ENCODE measurements at regions of chr10 and their contacts with region 1.

Region 1: GRCh38 chr10:48363617-48364355 is 57.3 kb downstream of the MAPK8 start:
- H3K4me3 ChIP-seq: no peak overlapping the region
- H3K27ac ChIP-seq: no peak overlapping the region
- H3K4me1 ChIP-seq: peaks cover 16% of the 10 kb centered on the region
- CTCF ChIP-seq: peak; percentile 63; the same call in 1 of the 2 replicates

Region 2: DNA sequence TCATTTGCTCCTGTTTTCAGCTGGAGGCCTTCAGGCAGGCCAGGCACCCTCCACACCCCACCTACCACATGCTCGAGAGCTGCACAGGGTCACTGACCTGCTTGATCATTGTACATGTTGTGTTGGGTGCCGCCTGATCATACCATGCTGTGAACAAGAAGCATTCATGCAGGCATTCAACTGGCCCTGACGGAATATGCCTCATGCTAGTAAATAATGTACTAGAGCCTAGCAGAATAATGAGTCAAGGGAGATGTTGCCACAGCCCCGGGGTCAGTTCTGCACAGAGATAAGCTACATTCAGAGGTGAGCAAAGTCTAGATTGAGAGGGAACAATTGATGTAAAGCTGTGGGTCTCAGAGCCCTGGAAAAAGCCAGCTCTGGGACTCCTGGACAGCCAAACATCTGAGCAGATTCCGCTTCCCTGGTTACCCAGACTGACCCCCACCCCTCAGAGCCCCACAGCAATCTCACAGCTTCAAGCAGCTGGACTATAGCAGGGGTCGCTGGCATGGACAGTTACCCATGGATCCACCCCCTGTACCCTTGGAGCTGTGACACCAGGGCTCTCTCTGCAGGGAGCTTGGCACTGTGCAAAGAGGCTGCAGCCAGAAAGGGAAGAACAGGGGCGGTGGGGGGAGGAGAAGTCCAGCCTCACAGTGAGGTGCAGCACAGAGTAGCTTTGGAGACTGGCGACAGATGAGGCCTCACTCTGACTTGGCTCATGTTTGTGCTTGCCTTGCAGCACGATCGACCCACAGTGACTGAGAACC is 175.9 kb before region 1 on chr10:
- CTCF ChIA-PET with region 1: no interaction called
- POLR2A ChIA-PET with region 1: no interaction called
- H3K4me3 ChIP-seq: no peak overlapping the region
- H3K27ac ChIP-seq: no peak overlapping the region
- H3K4me1 ChIP-seq: no peaks in the 10 kb centered on the region
- CTCF ChIP-seq: no peak

Region 3: DNA sequence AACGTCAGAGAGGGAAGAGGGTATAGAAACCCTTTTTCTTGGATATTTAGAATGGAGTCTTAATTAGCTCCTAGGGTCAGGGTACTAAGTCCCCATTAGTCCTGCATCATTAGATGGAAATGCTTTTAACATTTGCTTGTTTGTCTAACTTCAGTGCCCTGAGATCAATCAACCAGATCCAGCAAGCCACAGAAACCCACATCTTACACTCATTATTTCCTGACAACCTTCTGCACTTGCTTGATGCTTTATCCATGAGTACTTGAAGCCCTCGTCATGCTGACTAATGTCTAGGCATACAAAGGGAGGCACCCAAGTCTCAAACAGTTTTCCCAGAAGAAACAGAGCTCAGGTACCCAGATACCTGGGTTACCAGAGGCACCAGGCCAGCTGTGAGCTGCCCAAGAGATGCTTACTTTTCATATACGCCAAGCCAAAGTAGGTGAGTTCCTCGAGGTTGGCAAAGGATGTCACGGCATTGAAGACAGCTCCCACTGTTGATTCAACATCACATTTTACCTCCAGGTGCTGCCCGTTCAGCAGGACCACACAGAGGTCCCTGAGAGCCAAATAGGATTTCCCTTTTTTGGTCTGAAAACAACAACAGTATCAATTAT is 132.0 kb before region 1 on chr10:
- CTCF ChIA-PET with region 1: no interaction called
- POLR2A ChIA-PET with region 1: no interaction called
- H3K4me3 ChIP-seq: no peak overlapping the region
- H3K27ac ChIP-seq: no peak overlapping the region
- H3K4me1 ChIP-seq: no peaks in the 10 kb centered on the region
- CTCF ChIP-seq: no peak

Region 4: DNA sequence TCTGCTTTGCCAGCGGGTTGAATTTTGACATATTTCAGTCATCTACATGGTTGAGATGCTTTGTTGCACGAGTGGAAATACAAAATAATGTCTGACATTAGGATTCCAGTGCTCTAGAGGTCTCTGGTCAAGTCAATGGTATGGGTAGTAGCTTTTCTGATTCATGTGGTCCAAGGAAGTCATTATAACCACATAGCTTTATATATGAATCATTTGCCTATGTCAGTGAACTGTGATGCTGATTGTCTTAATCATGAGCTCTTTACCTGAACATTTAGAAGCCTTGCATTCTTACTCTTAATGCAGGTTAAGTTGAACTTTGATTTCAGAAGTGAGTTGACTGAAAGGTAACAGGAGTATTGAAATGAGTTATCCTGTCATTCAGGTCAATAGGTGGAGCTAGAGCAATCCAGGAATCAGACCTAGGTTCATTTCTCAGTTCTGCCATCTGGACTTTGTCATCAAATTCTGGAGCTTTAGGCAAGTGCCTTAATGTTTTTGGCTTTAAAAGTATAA is 54.0 kb before region 1 on chr10:
- CTCF ChIA-PET with region 1: interaction called, 21 read pairs
- POLR2A ChIA-PET with region 1: no interaction called
- H3K4me3 ChIP-seq: no peak overlapping the region
- H3K27ac ChIP-seq: no peak overlapping the region
- H3K4me1 ChIP-seq: peaks cover 9% of the 10 kb centered on the region; the same call in 1 of the 2 replicates
- CTCF ChIP-seq: peak; percentile 23; the same call in 1 of the 2 replicates

Region 5: DNA sequence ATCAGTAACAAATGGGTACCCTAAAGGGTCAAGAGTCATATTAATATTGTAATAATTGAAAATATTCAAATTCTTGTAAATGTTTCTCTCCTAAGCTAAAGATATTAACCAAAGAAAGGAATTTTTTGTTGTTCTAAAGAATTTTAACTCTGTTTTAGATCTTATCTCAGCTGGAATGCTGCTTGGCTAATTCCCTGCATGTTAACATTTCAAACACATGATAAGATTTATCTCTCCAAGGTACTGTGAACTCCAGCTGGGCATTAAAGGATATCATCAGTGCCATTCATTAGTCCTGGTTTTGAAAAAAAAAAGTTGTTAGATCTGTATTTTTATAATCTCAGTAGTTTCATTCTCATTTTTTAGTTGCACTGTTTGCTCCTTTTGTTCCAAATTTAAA is 19.6 kb after region 1 on chr10:
- CTCF ChIA-PET with region 1: interaction called, 25 read pairs
- POLR2A ChIA-PET with region 1: no interaction called
- H3K4me3 ChIP-seq: no peak overlapping the region
- H3K27ac ChIP-seq: no peak overlapping the region
- H3K4me1 ChIP-seq: peaks cover 3% of the 10 kb centered on the region; the same call in 1 of the 2 replicates
- CTCF ChIP-seq: no peak

Region 6: GRCh38 chr10:48506147-48506917 is 142.5 kb after region 1 on chr10:
- CTCF ChIA-PET with region 1: interaction called, 12 read pairs
- POLR2A ChIA-PET with region 1: no interaction called
- H3K4me3 ChIP-seq: no peak overlapping the region
- H3K27ac ChIP-seq: no peak overlapping the region
- H3K4me1 ChIP-seq: peaks cover 5% of the 10 kb centered on the region
- CTCF ChIP-seq: peak; percentile 57